ENCODE measurements at regions of chr10 and their contacts with region 1.

Region 1: DNA sequence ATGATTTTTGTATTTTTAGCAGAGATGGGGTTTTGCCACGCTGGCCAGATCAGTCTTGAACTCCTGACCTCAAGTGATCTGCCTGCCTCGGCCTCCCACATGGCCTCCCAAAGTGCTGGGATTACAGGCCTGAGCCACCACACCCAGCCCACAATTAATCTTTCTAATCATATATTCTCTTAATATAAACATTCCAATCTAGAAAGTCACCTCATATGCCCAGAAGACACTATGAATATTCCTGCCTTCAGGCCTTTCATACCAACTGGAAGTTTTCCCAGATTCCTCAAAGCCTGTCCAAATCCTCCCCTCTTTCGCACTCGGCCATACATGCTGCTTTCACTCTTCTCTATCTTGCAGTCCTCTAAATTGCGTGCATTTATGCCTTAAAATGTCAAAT is 32.6 kb downstream of the PDZD8 start:
- DNase-seq: no peak
- ATAC-seq: peak; percentile 43
- H3K4me3 ChIP-seq: peak overlapping the region; percentile 51; the same call in 1 of the 2 replicates
- H3K27ac ChIP-seq: peak overlapping the region; percentile 37
- H3K4me1 ChIP-seq: peaks cover 12% of the 10 kb centered on the region
- H3K27me3 ChIP-seq: no peaks in the 10 kb centered on the region
- CTCF ChIP-seq: no peak
- EP300 ChIP-seq: no peak
- POLR2A ChIP-seq: no peak
- RAD21 ChIP-seq: no peak

Region 2: GRCh38 chr10:117188371-117188770 is 154.3 kb before region 1 on chr10:
- CTCF ChIA-PET with region 1: no interaction called
- POLR2A ChIA-PET with region 1: no interaction called
- RAD21 ChIA-PET with region 1: no interaction called
- SMC1A ChIA-PET with region 1: no interaction called
- in situ Hi-C with region 1: no loop called
- intact Hi-C with region 1: no loop called
- DNase-seq: no peak
- ATAC-seq: no peak
- H3K4me3 ChIP-seq: no peak overlapping the region
- H3K27ac ChIP-seq: no peak overlapping the region
- H3K4me1 ChIP-seq: no peaks in the 10 kb centered on the region
- H3K27me3 ChIP-seq: no peaks in the 10 kb centered on the region; a peak in 1 of 4 replicates
- CTCF ChIP-seq: no peak
- EP300 ChIP-seq: no peak
- POLR2A ChIP-seq: no peak
- RAD21 ChIP-seq: no peak

Region 3: GRCh38 chr10:117360994-117361667 is 18.5 kb after region 1 on chr10:
- CTCF ChIA-PET with region 1: interaction called, 32 read pairs
- POLR2A ChIA-PET with region 1: interaction called, 5 read pairs
- RAD21 ChIA-PET with region 1: interaction called, 15 read pairs
- SMC1A ChIA-PET with region 1: interaction called, 18 read pairs
- in situ Hi-C with region 1: no loop called
- intact Hi-C with region 1: no loop called
- DNase-seq: no peak
- ATAC-seq: peak; percentile 48
- H3K4me3 ChIP-seq: no peak overlapping the region
- H3K27ac ChIP-seq: peak overlapping the region; percentile 37
- H3K4me1 ChIP-seq: peaks cover 15% of the 10 kb centered on the region
- H3K27me3 ChIP-seq: no peaks in the 10 kb centered on the region
- CTCF ChIP-seq: no peak
- EP300 ChIP-seq: no peak
- POLR2A ChIP-seq: no peak
- RAD21 ChIP-seq: no peak

Region 4: GRCh38 chr10:117370205-117370604 is 27.6 kb after region 1 on chr10:
- CTCF ChIA-PET with region 1: interaction called, 4 read pairs
- POLR2A ChIA-PET with region 1: interaction called, 6 read pairs
- RAD21 ChIA-PET with region 1: interaction called, 5 read pairs
- SMC1A ChIA-PET with region 1: interaction called, 14 read pairs
- in situ Hi-C with region 1: no loop called
- intact Hi-C with region 1: loop called (anchors 2 kb)
- DNase-seq: no peak
- ATAC-seq: no peak
- H3K4me3 ChIP-seq: no peak overlapping the region
- H3K27ac ChIP-seq: no peak overlapping the region
- H3K4me1 ChIP-seq: peaks cover 11% of the 10 kb centered on the region
- H3K27me3 ChIP-seq: no peaks in the 10 kb centered on the region
- CTCF ChIP-seq: no peak
- EP300 ChIP-seq: no peak
- POLR2A ChIP-seq: no peak
- RAD21 ChIP-seq: no peak

Region 5: DNA sequence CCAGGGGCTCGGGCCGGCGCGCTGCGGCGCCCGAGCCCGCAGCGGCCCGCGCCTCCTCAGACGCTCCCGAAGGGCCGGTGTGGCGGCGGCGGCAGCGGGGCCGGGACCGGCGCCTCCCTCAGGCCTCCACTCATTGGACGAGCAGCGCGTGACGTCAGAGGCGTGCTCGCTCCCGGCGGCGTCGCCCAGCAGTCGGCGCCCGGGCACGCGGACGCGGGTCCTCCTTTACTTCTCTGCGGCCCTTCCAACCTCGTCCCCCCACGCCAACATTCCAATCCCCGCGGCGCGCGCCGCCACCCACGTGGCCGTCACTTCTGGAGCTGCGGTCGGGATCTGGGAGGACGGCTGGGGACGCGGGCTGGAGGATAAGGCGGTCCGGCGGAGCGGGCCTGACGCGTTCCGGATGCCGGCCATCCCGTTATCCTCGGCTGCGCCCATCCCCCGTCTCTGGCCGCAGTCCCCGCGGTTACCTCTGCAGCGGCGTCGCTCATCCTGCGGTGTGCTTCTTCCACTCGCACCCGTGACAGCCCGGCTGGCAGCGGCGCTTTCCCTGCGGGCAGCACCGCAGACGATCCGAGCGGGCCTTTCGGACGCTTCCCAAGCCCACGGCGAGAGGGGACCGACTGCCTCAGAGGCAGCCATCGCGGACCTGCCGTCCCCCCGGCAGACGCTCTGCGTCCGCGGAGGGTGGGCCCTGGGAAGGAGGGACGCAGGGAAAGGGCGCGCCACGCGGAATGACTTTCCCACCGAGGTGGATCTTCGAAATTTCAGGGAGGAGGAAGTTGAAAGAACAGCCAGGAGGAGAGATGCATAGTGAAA is 32.9 kb after region 1 on chr10 and contains the start of gene PDZD8:
- CTCF ChIA-PET with region 1: no interaction called
- POLR2A ChIA-PET with region 1: interaction called, 6 read pairs
- RAD21 ChIA-PET with region 1: interaction called, 5 read pairs
- SMC1A ChIA-PET with region 1: interaction called, 14 read pairs
- in situ Hi-C with region 1: no loop called
- intact Hi-C with region 1: loop called (anchors 2 kb)
- DNase-seq: peak; percentile 33
- ATAC-seq: peak; percentile 83
- H3K4me3 ChIP-seq: peak within 1 kb of the TSS; percentile 84
- H3K27ac ChIP-seq: peak within 1 kb of the TSS; percentile 69
- H3K4me1 ChIP-seq: 0 out of 2 replicates have a peak, but pooled peaks cover 5% of the 10 kb centered on the region
- H3K27me3 ChIP-seq: no peaks in the 10 kb centered on the region; a peak in 1 of 4 replicates
- CTCF ChIP-seq: no peak
- EP300 ChIP-seq: no peak
- POLR2A ChIP-seq: peak; percentile 74; the same call in 1 of the 2 replicates
- RAD21 ChIP-seq: no peak
- polyA plus RNA-seq, gene PDZD8: 2.0 to 2.1 TPM

Measured in GM12878 (cell line).